Dorsolateral prefrontal cortex (tissue), 120 donors: ENCODE measurements at regions of chr5 and their contacts with region 1.

Region 1: GRCh38 chr5:11903614-11904269 is 504 bp downstream of the CTNND2 start:
- DNase-seq: peak in 6 of 10 donors; percentile 24 to 70 (median 38)
- H3K4me3 ChIP-seq: peak overlapping the region; percentile 54 to 86 (median 77)
- H3K27ac ChIP-seq: peak overlapping the region; percentile 18 to 97 (median 93)
- H3K27me3 ChIP-seq: peaks cover 0 to 5% (median 0%) of the 10 kb centered on the region in 45 donors
- CTCF ChIP-seq: peak in 32 of 56 donors; percentile 4 to 50 (median 21)

Region 2: GRCh38 chr5:10701567-10702039 is 1202.1 kb before region 1 on chr5:
- intact Hi-C with region 1: loop called (anchors 5 to 10 kb)
- DNase-seq: peak in 2 of 10 donors; percentile 13 to 32
- H3K4me3 ChIP-seq: no peak overlapping the region
- H3K27ac ChIP-seq: peak overlapping the region in 5 of 59 donors; percentile 4 to 34 (median 30)
- H3K27me3 ChIP-seq: no peaks in the 10 kb centered on the region
- CTCF ChIP-seq: peak; percentile 58 to 90 (median 82)

Region 3: DNA sequence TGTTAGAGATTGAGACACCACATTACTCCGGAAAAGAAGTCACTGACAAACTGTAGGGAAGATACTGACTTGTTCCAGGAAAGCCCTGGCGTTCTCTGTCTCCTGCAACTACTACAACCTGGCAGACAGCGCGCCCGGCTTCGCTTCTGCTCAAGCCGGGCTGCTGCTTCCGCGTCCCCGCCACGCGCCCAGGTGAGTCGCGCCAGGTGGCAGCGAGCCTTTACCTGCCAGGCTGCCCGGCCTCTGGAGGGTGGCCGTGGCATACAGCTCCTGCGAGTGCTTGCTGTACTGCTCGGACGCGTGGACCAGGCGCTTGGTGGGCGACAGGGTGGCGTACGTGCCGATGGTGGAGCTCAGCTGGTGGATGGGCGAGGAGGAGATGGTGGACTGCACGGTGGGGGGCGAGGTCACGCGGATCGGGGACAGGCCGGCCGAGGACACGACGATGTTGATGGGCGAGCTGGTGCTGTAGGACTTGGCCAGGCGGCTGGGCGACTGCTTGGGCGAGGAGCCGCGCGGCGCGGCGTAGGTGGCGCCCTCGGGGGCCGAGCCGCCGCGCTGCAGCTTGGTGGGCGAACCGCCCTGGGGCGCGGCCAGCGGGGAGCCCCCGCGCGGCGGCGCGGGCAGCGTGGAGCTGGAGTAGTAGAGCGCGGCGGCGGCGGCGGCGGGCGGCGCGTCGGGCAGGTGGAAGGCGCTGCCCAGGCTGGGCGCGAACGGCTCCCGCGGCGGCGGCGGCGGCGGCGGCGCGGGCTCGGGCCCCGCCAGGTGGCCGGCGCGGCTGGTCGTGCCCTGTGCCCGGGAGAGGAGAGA is 519.1 kb before region 1 on chr5:
- intact Hi-C with region 1: loop called in 1 of 2 experiments (anchors 2 kb)
- DNase-seq: peak; percentile 44 to 79 (median 56)
- H3K4me3 ChIP-seq: peak overlapping the region; percentile 36 to 81 (median 65)
- H3K27ac ChIP-seq: peak overlapping the region; percentile 49 to 96 (median 91)
- H3K27me3 ChIP-seq: no peaks in the 10 kb centered on the region
- CTCF ChIP-seq: peak in 30 of 56 donors; percentile 6 to 59 (median 24)

Region 4: DNA sequence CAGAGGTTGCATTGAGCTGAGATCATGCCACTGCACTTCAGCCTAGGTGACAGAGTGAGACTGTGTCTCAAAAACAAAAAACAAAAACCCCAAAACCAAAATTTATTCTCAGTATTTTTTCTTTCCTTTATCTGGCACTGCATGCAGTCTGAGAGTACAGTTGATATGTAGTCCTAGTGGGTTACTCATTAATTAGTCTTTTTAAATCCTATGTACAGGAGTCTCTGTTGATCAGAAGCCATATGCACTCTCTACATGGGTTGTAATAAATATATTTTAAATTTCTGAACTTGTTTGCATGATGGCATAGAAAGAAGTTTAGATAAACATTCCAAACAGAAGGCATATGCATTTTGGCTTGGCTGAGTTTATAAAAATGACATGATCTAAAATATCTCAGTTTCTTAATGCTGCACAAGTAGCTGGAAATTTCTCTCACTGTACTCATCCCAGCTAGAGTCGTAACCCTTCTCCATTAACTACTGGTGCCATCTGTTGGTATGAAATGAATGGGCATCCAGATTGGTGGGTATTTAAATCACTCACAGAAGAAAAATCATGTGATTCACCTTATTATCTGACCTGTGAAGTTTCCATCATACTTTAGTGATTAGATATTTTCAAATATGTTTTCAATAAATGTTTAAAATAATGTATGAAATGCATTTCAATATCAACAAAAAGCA is 284.3 kb before region 1 on chr5:
- intact Hi-C with region 1: loop called in 1 of 2 experiments (anchors 10 kb)
- DNase-seq: no peak
- H3K4me3 ChIP-seq: no peak overlapping the region
- H3K27ac ChIP-seq: peak overlapping the region in 11 of 59 donors; percentile 1 to 54 (median 27)
- H3K27me3 ChIP-seq: no peaks in the 10 kb centered on the region
- CTCF ChIP-seq: peak; percentile 32 to 89 (median 66)